Activated CD4-positive, alpha-beta T cell treated with anti-CD3 and anti-CD28 coated beads for 36 hours (primary cell): ENCODE measurements at regions of chr5 and their contacts with region 1.

Region 1: GRCh38 chr5:39898731-39899130 is 474.0 kb upstream of the DAB2 start:
- DNase-seq: no peak
- ATAC-seq: no peak
- H3K4me3 Mint-ChIP-seq: no peak overlapping the region
- H3K27ac Mint-ChIP-seq: no peak overlapping the region
- H3K4me1 Mint-ChIP-seq: no peaks in the 10 kb centered on the region
- H3K27me3 Mint-ChIP-seq: peaks cover 7% of the 10 kb centered on the region

Region 2: DNA sequence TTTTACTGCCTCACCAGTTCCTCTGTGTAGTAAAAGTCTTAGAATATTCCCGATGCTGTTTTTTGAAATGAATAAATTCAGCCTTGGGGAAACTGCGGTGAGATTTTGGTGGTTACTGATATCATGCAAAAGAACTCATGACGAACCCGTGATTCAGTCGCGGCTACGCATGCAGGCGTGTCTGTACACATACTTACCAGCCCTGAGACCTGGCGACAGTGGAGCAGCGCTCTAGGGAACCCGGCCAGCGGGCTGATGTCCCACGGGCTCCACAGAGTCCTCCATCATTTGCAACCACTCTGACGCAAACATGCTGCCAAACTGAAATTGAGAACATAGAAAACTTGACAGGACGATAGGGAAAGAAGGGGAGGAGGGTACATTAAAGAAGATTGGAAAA is 158.3 kb before region 1 on chr5:
- CTCF ChIA-PET with region 1: no interaction called
- POLR2A ChIA-PET with region 1: no interaction called
- intact Hi-C with region 1: no loop called
- DNase-seq: no peak
- ATAC-seq: no peak
- H3K4me3 Mint-ChIP-seq: no peak overlapping the region
- H3K27ac Mint-ChIP-seq: no peak overlapping the region
- H3K4me1 Mint-ChIP-seq: no peaks in the 10 kb centered on the region
- H3K27me3 Mint-ChIP-seq: peaks cover 3% of the 10 kb centered on the region

Region 3: GRCh38 chr5:39800042-39800601 is 98.6 kb before region 1 on chr5:
- CTCF ChIA-PET with region 1: no interaction called
- POLR2A ChIA-PET with region 1: no interaction called
- intact Hi-C with region 1: no loop called
- DNase-seq: no peak
- ATAC-seq: no peak
- H3K4me3 Mint-ChIP-seq: no peak overlapping the region
- H3K27ac Mint-ChIP-seq: no peak overlapping the region
- H3K4me1 Mint-ChIP-seq: no peaks in the 10 kb centered on the region
- H3K27me3 Mint-ChIP-seq: peaks cover 4% of the 10 kb centered on the region

Region 4: GRCh38 chr5:39880985-39881384 is 17.7 kb before region 1 on chr5:
- CTCF ChIA-PET with region 1: no interaction called
- POLR2A ChIA-PET with region 1: no interaction called
- intact Hi-C with region 1: loop called in 1 of 2 experiments (anchors 2 kb)
- DNase-seq: no peak
- ATAC-seq: no peak
- H3K4me3 Mint-ChIP-seq: no peak overlapping the region
- H3K27ac Mint-ChIP-seq: no peak overlapping the region
- H3K4me1 Mint-ChIP-seq: no peaks in the 10 kb centered on the region
- H3K27me3 Mint-ChIP-seq: peaks cover 22% of the 10 kb centered on the region